Activated naive CD8-positive, alpha-beta T cell treated with anti-CD3 and anti-CD28 coated beads, Interleukin-2, amount 10 ng/mL, durations not matched to agents 7 days and 5 days (primary cell): ENCODE measurements at regions of chr11 and their contacts with region 1.

Region 1: GRCh38 chr11:75802913-75803820 is 11.8 kb upstream of the UVRAG start:
- DNase-seq: peak; percentile 60
- ATAC-seq: peak; percentile 80
- H3K4me3 Mint-ChIP-seq: no peak overlapping the region
- H3K27ac Mint-ChIP-seq: no peak overlapping the region
- H3K4me1 Mint-ChIP-seq: peaks cover 9% of the 10 kb centered on the region
- H3K27me3 Mint-ChIP-seq: peaks cover 3% of the 10 kb centered on the region

Region 2: DNA sequence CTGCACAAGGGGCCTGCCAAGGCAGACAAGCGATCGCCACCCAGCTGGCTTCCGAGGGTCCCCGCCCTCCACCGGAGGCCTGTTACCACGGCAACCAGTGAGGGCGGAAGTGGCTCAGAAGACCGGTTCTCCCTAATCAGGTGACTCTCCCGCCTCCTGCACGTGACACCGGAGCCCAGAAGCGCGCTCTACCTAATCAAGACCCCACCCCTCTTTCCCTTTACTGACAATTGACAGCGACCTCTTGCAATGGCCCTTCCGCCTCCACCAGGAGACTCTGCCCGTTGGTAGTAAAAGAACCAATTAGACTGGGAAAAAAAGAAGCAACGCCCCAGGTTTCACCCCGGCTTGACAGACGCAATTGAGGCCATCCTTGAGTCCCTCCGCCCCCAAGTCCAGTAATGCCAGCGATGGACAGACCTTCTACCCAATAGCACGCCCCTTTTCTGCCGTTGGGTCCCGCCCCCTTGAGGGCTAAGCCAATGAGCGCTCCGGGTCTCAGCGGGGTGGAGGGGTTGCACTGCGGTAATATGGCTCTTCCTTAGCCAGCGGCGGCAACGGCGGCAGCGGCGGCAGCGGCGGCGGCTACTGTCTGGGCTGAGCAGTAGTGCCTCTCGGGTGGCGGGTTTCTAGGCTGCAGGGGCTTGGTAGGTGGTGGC is 11.6 kb after region 1 on chr11 and contains the start of gene UVRAG:
- POLR2A ChIA-PET with region 1: interaction called, 12 read pairs
- DNase-seq: peak; percentile 95
- ATAC-seq: peak; percentile 89
- H3K4me3 Mint-ChIP-seq: peak within 1 kb of the TSS; percentile 93
- H3K27ac Mint-ChIP-seq: peak within 1 kb of the TSS; percentile 95
- H3K4me1 Mint-ChIP-seq: peaks cover 10% of the 10 kb centered on the region
- H3K27me3 Mint-ChIP-seq: peaks cover 7% of the 10 kb centered on the region
- total RNA-seq, gene UVRAG: 22.3 to 22.6 TPM